CD8-positive, alpha-beta memory T cell (primary cell): ENCODE measurements at regions of chr9 and their contacts with region 1.

Region 1: GRCh38 chr9:129131300-129132145 is 20.3 kb downstream of the PTPA start:
- DNase-seq: peak; percentile 75 to 87 (median 77)
- H3K4me3 ChIP-seq: no peak overlapping the region
- H3K4me3 Mint-ChIP-seq: peak overlapping the region in 1 of 7 donors; percentile 13
- H3K27ac ChIP-seq: no peak overlapping the region
- H3K27ac Mint-ChIP-seq: peak overlapping the region in 5 of 8 donors; percentile 32 to 87 (median 63)
- H3K4me1 ChIP-seq: peaks cover 5% of the 10 kb centered on the region
- H3K4me1 Mint-ChIP-seq: peaks cover 5 to 6% (median 6%) of the 10 kb centered on the region in 3 donors
- H3K27me3 ChIP-seq: no peaks in the 10 kb centered on the region
- H3K27me3 Mint-ChIP-seq: no peaks in the 10 kb centered on the region

Region 2: GRCh38 chr9:129064499-129064908 is 67.0 kb before region 1 on chr9:
- CTCF ChIA-PET with region 1: no interaction called
- POLR2A ChIA-PET with region 1: no interaction called
- DNase-seq: no peak
- H3K4me3 ChIP-seq: no peak overlapping the region
- H3K4me3 Mint-ChIP-seq: no peak overlapping the region
- H3K27ac ChIP-seq: no peak overlapping the region
- H3K27ac Mint-ChIP-seq: peak overlapping the region in 1 of 8 donors; percentile 36
- H3K4me1 ChIP-seq: peaks cover 11% of the 10 kb centered on the region
- H3K4me1 Mint-ChIP-seq: peaks cover 8 to 15% (median 9%) of the 10 kb centered on the region in 3 donors
- H3K27me3 ChIP-seq: no peaks in the 10 kb centered on the region
- H3K27me3 Mint-ChIP-seq: no peaks in the 10 kb centered on the region

Region 3: DNA sequence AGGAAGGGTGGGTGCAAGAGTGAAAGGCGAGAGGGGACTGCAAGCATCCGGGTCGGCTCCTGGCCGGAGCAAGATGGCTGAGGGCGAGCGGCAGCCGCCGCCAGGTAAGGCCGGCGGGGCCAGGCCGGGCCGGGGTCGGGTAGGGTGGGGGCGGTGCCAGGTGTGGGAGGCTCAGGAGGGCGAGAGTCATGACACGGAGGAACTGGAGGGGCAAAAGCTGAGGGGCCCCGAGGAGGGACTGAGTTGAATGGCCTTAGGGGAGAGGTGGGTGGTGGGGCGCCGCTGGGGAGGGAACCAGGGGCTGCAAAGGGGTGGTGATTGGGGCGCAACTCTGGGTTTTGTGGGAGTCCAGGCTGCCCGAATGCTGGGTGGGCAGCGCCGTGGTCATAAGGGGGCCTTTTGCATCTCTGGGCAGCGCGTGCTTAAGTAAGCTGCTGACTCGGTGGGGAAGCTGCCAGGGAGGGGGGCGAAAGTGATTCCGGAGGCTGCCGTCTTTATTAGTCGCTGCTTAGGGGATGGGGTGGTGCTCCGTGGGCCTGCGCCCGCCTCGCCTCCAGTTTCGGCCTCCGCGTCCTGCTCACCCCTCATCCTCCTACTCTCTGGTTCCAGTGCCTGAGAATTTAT is 19.9 kb before region 1 on chr9:
- CTCF ChIA-PET with region 1: interaction called, 33 read pairs
- POLR2A ChIA-PET with region 1: interaction called, 3 read pairs
- DNase-seq: peak in 1 of 5 donors; percentile 11
- H3K4me3 ChIP-seq: peak overlapping the region; percentile 99
- H3K4me3 Mint-ChIP-seq: peak overlapping the region; percentile 90 to 97 (median 95)
- H3K27ac ChIP-seq: peak overlapping the region; percentile 90
- H3K27ac Mint-ChIP-seq: peak overlapping the region in 7 of 8 donors; percentile 82 to 97 (median 94)
- H3K4me1 ChIP-seq: peaks cover 20% of the 10 kb centered on the region
- H3K4me1 Mint-ChIP-seq: peaks cover 26 to 53% (median 26%) of the 10 kb centered on the region in 3 donors
- H3K27me3 ChIP-seq: no peaks in the 10 kb centered on the region
- H3K27me3 Mint-ChIP-seq: no peaks in the 10 kb centered on the region

Region 4: GRCh38 chr9:129282272-129283211 is 151.0 kb after region 1 on chr9:
- CTCF ChIA-PET with region 1: no interaction called
- POLR2A ChIA-PET with region 1: no interaction called
- DNase-seq: no peak
- H3K4me3 ChIP-seq: no peak overlapping the region
- H3K4me3 Mint-ChIP-seq: no peak overlapping the region
- H3K27ac ChIP-seq: no peak overlapping the region
- H3K27ac Mint-ChIP-seq: peak overlapping the region in 2 of 8 donors; percentile 54 to 73
- H3K4me1 ChIP-seq: no peaks in the 10 kb centered on the region
- H3K4me1 Mint-ChIP-seq: no peaks in the 10 kb centered on the region
- H3K27me3 ChIP-seq: no peaks in the 10 kb centered on the region
- H3K27me3 Mint-ChIP-seq: no peaks in the 10 kb centered on the region

Region 5: GRCh38 chr9:129617167-129617566 is 485.6 kb after region 1 on chr9:
- CTCF ChIA-PET with region 1: interaction called, 27 read pairs
- POLR2A ChIA-PET with region 1: no interaction called
- DNase-seq: no peak
- H3K4me3 ChIP-seq: no peak overlapping the region
- H3K4me3 Mint-ChIP-seq: peak overlapping the region in 1 of 7 donors; percentile 48
- H3K27ac ChIP-seq: no peak overlapping the region
- H3K27ac Mint-ChIP-seq: peak overlapping the region in 1 of 8 donors; percentile 17
- H3K4me1 ChIP-seq: peaks cover 8% of the 10 kb centered on the region
- H3K4me1 Mint-ChIP-seq: peaks cover 8 to 18% (median 10%) of the 10 kb centered on the region in 3 donors
- H3K27me3 ChIP-seq: peaks cover 28% of the 10 kb centered on the region
- H3K27me3 Mint-ChIP-seq: peaks cover 25 to 31% of the 10 kb centered on the region in 2 donors

Region 6: DNA sequence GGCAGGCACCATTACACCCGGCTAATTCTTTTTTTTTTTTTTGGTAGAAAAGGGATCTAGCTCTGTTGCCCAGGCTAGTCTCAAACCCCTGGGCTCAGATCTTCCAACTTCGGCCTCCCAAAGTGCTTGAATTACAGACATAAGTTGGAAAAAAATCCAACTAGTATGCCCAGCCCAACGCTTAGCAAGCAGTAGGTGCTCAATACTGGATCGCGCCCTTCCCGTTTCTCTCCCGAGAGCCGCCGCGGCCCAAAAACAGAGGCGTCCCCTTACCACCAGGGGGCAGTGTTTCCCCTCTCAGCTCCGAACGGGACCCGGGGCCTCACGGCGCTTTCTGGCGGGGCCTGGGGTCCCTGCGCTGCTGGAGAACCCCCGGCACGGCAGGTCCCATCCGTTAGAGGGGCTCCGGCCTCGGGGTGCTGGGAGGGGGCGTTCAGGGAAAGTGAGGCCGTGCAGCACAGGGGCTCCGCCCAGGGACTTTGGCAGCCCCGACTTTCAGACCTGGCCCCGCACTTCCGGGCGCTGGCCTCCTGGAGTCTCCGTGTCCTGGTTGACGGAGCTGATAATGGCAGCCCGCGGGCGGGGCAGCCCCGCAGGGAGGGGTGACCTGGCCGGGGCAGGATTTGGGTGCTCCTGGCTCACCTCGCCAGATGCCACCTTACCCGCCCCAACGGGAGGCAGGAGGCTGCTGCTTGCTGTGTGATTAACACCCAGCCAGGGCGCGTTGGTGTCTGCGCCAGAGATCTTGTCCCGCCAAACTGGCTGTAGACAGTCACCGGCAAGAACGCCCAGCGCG is 606.2 kb after region 1 on chr9:
- CTCF ChIA-PET with region 1: interaction called, 12 read pairs
- POLR2A ChIA-PET with region 1: no interaction called
- DNase-seq: peak; percentile 77 to 87 (median 84)
- H3K4me3 ChIP-seq: peak overlapping the region; percentile 81
- H3K4me3 Mint-ChIP-seq: peak overlapping the region; percentile 71 to 90 (median 76)
- H3K27ac ChIP-seq: peak overlapping the region; percentile 82
- H3K27ac Mint-ChIP-seq: peak overlapping the region; percentile 42 to 93 (median 74)
- H3K4me1 ChIP-seq: peaks cover 13% of the 10 kb centered on the region
- H3K4me1 Mint-ChIP-seq: peaks cover 6 to 13% (median 9%) of the 10 kb centered on the region in 3 donors
- H3K27me3 ChIP-seq: no peaks in the 10 kb centered on the region
- H3K27me3 Mint-ChIP-seq: peaks cover 0 to 7% of the 10 kb centered on the region in 2 donors

Region 7: GRCh38 chr9:129796029-129796910 is 664.7 kb after region 1 on chr9:
- CTCF ChIA-PET with region 1: interaction called, 11 read pairs
- POLR2A ChIA-PET with region 1: no interaction called
- DNase-seq: no peak
- H3K4me3 ChIP-seq: no peak overlapping the region
- H3K4me3 Mint-ChIP-seq: no peak overlapping the region
- H3K27ac ChIP-seq: no peak overlapping the region
- H3K27ac Mint-ChIP-seq: no peak overlapping the region
- H3K4me1 ChIP-seq: no peaks in the 10 kb centered on the region
- H3K4me1 Mint-ChIP-seq: no peaks in the 10 kb centered on the region
- H3K27me3 ChIP-seq: no peaks in the 10 kb centered on the region
- H3K27me3 Mint-ChIP-seq: peaks cover 0 to 4% of the 10 kb centered on the region in 2 donors